Esophagus muscularis mucosa (tissue), 4 donors: ENCODE measurements at regions of chr16 and their contacts with region 1.

Region 1: GRCh38 chr16:46855389-46855788 is 24.4 kb upstream of the C16orf87 start:
- DNase-seq: no peak
- H3K4me3 ChIP-seq: no peak overlapping the region
- H3K27ac ChIP-seq: no peak overlapping the region
- H3K4me1 ChIP-seq: peaks cover 0 to 18% (median 15%) of the 10 kb centered on the region in 4 donors
- H3K27me3 ChIP-seq: no peaks in the 10 kb centered on the region
- CTCF ChIP-seq: no peak
- EP300 ChIP-seq: no peak
- POLR2A ChIP-seq: no peak

Region 2: DNA sequence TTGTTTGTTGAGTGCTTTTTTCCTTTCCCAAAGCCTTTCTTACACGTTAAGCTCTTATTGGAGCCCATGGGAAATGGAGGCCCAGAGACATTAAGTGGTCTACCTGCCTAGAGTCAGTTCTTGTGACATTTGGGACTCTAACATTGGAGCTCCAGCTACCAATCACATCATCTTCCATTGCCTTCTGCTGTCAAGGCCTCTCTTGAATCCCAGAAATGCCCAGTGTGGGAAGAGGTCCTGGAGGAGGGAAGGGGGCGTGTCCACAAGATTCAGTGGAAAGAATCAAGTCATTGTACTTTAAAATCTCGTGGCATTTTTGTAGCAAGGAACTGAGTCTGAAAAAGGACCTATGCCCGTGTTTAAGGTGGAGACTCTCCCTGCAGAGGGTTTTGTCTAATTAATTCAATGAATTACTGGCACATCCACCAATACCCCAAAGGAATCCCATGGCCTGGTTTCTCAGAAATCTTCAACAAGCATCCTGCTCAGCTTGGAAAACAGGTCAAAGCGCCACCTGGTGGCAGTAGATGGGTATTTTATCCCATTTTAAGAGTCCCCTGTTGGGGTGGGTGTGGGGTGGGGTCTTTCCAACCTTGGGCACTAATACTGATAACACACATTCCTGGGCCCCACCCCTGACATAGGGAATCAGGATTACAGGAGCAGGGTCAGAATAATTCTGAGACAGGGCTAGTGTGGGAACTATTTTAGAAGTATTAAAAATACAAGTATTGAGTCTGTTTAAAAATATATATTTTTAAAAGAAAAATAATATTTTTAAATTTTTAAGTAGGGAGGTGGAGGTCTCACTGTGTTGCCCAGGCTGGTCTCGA is 53.4 kb after region 1 on chr16:
- intact Hi-C with region 1: loop called (anchors 1 kb)
- DNase-seq: no peak
- H3K4me3 ChIP-seq: no peak overlapping the region
- H3K27ac ChIP-seq: no peak overlapping the region
- H3K4me1 ChIP-seq: peaks cover 0 to 10% (median 2%) of the 10 kb centered on the region in 4 donors
- H3K27me3 ChIP-seq: no peaks in the 10 kb centered on the region
- CTCF ChIP-seq: peak; percentile 62 to 90 (median 88)
- EP300 ChIP-seq: no peak
- POLR2A ChIP-seq: no peak